ENCODE measurements at regions of chr3 and their contacts with region 1.

Region 1: GRCh38 chr3:102163036-102163827 is 271.6 kb upstream of the ZPLD1 start:
- DNase-seq: peak; percentile 65
- H3K4me3 Mint-ChIP-seq: peak overlapping the region; percentile 27
- H3K27ac Mint-ChIP-seq: peak overlapping the region; percentile 98
- H3K4me1 Mint-ChIP-seq: peaks cover 30% of the 10 kb centered on the region
- H3K27me3 Mint-ChIP-seq: no peaks in the 10 kb centered on the region
- CTCF ChIP-seq: no peak

Region 2: GRCh38 chr3:101868534-101869464 is 294.4 kb before region 1 on chr3:
- CTCF ChIA-PET with region 1: no interaction called
- intact Hi-C with region 1: loop called (anchors 2 kb)
- DNase-seq: peak; percentile 50
- H3K4me3 Mint-ChIP-seq: peak overlapping the region; percentile 28
- H3K27ac Mint-ChIP-seq: peak overlapping the region; percentile 95
- H3K4me1 Mint-ChIP-seq: peaks cover 51% of the 10 kb centered on the region
- H3K27me3 Mint-ChIP-seq: no peaks in the 10 kb centered on the region
- CTCF ChIP-seq: no peak

Region 3: GRCh38 chr3:102092617-102093466 is 70.4 kb before region 1 on chr3:
- CTCF ChIA-PET with region 1: interaction called, 11 read pairs
- intact Hi-C with region 1: no loop called
- DNase-seq: no peak
- H3K4me3 Mint-ChIP-seq: no peak overlapping the region
- H3K27ac Mint-ChIP-seq: peak overlapping the region; percentile 70
- H3K4me1 Mint-ChIP-seq: peaks cover 20% of the 10 kb centered on the region
- H3K27me3 Mint-ChIP-seq: no peaks in the 10 kb centered on the region
- CTCF ChIP-seq: no peak

Region 4: DNA sequence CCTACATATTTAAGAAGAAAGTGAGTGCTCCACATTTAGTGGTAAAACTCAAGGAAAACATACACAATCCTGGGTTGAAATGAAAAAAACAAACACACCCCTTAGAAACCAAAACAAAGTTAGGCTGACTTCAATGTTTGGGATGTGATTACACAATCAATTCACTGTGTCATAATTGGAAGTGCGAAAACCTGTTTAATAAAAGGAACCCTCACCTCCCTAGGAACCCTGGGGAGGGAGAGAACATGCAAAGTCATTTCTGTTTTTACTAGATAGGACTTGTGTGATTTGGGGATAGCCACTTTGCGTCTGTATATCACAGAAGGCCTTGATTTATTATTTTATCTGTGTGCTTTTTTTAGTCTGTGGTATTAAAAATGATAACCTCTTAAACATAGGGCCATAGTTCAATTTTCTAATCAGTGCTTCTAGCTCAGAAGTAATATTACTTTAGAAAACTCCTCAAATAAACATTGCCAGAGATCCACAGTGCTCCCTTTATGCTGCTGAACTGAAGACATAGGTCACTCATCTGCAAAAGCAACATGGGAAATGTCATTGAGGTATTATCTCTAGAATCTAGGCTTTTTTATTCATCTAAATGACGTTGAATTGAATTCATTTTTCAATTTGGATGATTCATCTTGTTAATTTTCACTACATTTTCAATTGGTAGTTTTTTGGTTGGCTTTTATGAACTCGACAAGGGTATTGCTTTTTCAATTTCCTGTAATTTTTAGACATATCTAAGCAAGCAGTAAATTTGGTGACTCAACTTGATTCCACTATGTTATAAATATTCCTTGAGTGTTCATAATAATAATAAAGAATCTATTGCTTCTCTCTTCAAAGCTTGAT is 38.7 kb before region 1 on chr3:
- CTCF ChIA-PET with region 1: no interaction called
- intact Hi-C with region 1: loop called (anchors 2 kb)
- DNase-seq: peak; percentile 16
- H3K4me3 Mint-ChIP-seq: no peak overlapping the region
- H3K27ac Mint-ChIP-seq: peak overlapping the region; percentile 52
- H3K4me1 Mint-ChIP-seq: peaks cover 25% of the 10 kb centered on the region
- H3K27me3 Mint-ChIP-seq: no peaks in the 10 kb centered on the region
- CTCF ChIP-seq: no peak

Region 5: GRCh38 chr3:102174312-102174712 is 11.1 kb after region 1 on chr3:
- CTCF ChIA-PET with region 1: interaction called, 14 read pairs
- intact Hi-C with region 1: loop called (anchors 1 kb)
- DNase-seq: peak; percentile 52
- H3K4me3 Mint-ChIP-seq: no peak overlapping the region
- H3K27ac Mint-ChIP-seq: peak overlapping the region; percentile 98
- H3K4me1 Mint-ChIP-seq: peaks cover 54% of the 10 kb centered on the region
- H3K27me3 Mint-ChIP-seq: no peaks in the 10 kb centered on the region
- CTCF ChIP-seq: no peak

Region 6: DNA sequence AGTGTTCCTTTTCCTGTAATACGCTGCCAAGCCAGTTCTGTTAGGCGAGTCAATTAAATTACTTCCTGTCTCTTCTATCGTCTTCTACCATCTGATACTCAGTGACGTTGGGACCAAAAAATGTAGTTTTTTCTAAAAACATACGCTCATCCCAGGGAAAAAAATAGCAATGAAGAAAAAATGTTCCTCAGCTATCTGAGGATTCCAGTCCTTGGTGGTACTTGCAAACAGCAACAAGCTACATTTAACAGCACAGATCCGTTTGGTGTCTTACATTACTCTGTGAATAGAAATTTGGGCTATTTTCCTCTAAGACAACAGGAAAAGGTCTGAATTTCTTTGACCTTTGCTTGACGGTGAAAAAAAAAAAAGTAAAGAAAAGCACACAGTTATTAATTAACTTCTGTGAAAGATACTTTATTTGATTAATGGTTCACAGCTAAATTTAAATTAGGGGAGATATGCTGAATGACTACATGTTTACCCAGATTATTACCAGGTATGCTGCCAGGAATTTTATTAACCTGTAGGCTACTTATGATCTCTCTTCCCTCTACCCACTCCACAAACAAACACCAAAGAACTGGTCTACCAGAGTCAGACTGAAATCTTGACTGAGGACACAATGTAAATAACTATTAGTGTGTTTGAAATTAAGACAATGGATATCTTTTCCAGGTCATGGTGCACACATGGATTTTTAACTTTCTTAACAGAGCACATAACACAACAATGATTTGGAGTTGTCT is 17.2 kb after region 1 on chr3:
- CTCF ChIA-PET with region 1: interaction called, 14 read pairs
- intact Hi-C with region 1: loop called (anchors 1 kb)
- DNase-seq: no peak
- H3K4me3 Mint-ChIP-seq: no peak overlapping the region
- H3K27ac Mint-ChIP-seq: no peak overlapping the region
- H3K4me1 Mint-ChIP-seq: peaks cover 23% of the 10 kb centered on the region
- H3K27me3 Mint-ChIP-seq: no peaks in the 10 kb centered on the region
- CTCF ChIP-seq: no peak